Posterior cingulate gyrus (tissue), 11 donors: ENCODE measurements at regions of chr10 and their contacts with region 1.

Region 1: DNA sequence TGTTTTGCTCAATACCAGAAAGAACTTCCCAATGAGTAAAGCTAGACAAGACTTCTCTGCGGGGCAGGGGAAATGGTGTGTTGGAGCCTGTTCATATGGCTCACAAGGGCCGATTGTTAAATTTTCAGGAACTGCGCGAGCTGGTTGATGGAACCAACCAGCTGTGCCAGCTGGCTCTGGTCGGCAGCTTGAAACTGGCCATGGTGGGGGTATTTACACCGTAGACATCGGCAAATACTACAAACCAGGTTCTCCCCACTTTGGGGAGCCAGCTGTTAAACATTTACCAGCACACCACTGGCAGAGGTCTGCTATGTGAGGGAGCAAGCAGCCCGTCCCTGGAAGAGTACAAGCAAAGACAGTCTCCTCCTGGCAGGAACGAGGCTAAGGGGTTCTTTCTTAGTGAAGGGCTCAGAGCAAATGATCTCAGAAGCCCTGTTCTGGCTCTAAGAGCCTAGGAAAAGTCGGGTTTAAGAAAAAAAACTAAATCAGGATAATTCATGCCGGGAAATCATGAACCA is 8.8 kb upstream of the ZMIZ1 start:
- DNase-seq: peak; percentile 47 to 94 (median 66)

Region 2: GRCh38 chr10:78913219-78914059 is 146.5 kb before region 1 on chr10:
- intact Hi-C with region 1: loop called (anchors 5 kb)
- DNase-seq: peak; percentile 88 to 99 (median 94)

Region 3: GRCh38 chr10:79007421-79008319 is 52.2 kb before region 1 on chr10:
- intact Hi-C with region 1: no loop called
- DNase-seq: peak in 2 of 10 donors; percentile 31 to 51